Panc1 (cell line): ENCODE measurements at regions of chr17 and their contacts with region 1.

Region 1: DNA sequence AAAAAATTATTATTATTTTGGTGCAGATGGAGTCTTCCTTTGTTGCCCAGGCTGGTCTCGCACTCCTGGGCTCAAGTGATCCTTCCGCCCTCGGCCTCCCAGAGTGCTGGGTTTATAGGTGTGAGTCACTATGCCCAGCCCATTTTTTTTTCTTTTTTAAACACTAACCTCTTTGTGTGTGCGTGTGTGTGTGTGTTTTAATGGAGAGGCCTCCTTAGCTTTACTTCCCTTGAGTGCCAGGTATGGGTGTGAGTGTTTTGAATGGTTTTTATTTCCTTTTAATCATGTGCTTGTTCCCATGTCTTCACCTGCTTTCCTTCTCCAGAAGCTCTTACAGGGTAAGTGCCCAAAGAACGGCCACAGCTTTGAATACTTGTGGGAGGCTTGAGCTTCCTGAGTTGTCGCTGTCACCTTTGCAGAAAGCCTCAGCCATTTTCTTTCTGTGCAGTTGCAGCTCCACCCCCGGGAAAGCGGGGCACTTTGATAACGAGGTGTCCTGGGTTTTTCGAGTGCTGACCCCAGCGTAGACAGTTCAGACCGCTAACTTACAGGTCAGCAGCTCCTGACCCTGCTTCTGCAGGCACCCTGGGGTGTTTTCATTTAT is 22.6 kb downstream of the AKAP1 start:
- DNase-seq: peak; percentile 36
- ATAC-seq: peak; percentile 84
- H3K4me3 ChIP-seq: peak overlapping the region in 1 of 2 experiments; percentile 22; a peak in 2 of 4 replicates
- H3K27ac ChIP-seq: peak overlapping the region; percentile 76
- H3K4me1 ChIP-seq: peaks cover 43% of the 10 kb centered on the region
- H3K27me3 ChIP-seq: no peaks in the 10 kb centered on the region
- CTCF ChIP-seq: no peak

Region 2: GRCh38 chr17:58352014-58352842 is 1244.6 kb after region 1 on chr17 and contains the start of gene SUPT4H1:
- CTCF ChIA-PET with region 1: no interaction called
- POLR2A ChIA-PET with region 1: interaction called, 10 read pairs
- in situ Hi-C with region 1: no loop called
- intact Hi-C with region 1: no loop called
- DNase-seq: peak; percentile 20
- ATAC-seq: peak; percentile 99
- H3K4me3 ChIP-seq: peak within 1 kb of the TSS; percentile 98 to 99
- H3K27ac ChIP-seq: peak within 1 kb of the TSS; percentile 93
- H3K4me1 ChIP-seq: peaks cover 10% of the 10 kb centered on the region
- H3K27me3 ChIP-seq: no peaks in the 10 kb centered on the region
- CTCF ChIP-seq: no peak
- total RNA-seq, gene SUPT4H1: 53.8 TPM